Posterior vena cava (tissue), 2 donors: ENCODE measurements at regions of chr3 and their contacts with region 1.

Region 1: GRCh38 chr3:155938409-155938808 is 68.0 kb downstream of the GMPS start:
- DNase-seq: no peak

Region 2: GRCh38 chr3:156349111-156349510 is 410.7 kb after region 1 on chr3:
- intact Hi-C with region 1: loop called in 1 of 2 experiments (anchors 5 kb)
- DNase-seq: no peak